Prostate gland (tissue), 2 donors: ENCODE measurements at regions of chr16 and their contacts with region 1.

Region 1: GRCh38 chr16:69243479-69243878 is 56.5 kb downstream of the SNTB2 start:
- DNase-seq: no peak
- H3K4me3 ChIP-seq: no peak overlapping the region
- H3K27ac ChIP-seq: peak overlapping the region in 1 of 2 donors; percentile 2
- H3K4me1 ChIP-seq: no peaks in the 10 kb centered on the region
- H3K27me3 ChIP-seq: no peaks in the 10 kb centered on the region
- CTCF ChIP-seq: no peak
- POLR2A ChIP-seq: no peak

Region 2: GRCh38 chr16:69186642-69187445 is 56.6 kb before region 1 on chr16 and contains the start of gene SNTB2:
- intact Hi-C with region 1: loop called (anchors 10 kb)
- DNase-seq: peak; percentile 94
- H3K4me3 ChIP-seq: peak within 1 kb of the TSS; percentile 80 to 87
- H3K27ac ChIP-seq: peak within 1 kb of the TSS; percentile 86
- H3K4me1 ChIP-seq: peaks cover 4% of the 10 kb centered on the region
- H3K27me3 ChIP-seq: no peaks in the 10 kb centered on the region
- CTCF ChIP-seq: peak in 1 of 4 experiments; percentile 15
- POLR2A ChIP-seq: peak; percentile 98
- total RNA-seq, gene SNTB2: 33.7 to 53.0 TPM

Region 3: GRCh38 chr16:69465083-69465721 is 221.7 kb after region 1 on chr16:
- intact Hi-C with region 1: no loop called
- DNase-seq: no peak
- H3K4me3 ChIP-seq: no peak overlapping the region
- H3K27ac ChIP-seq: peak overlapping the region in 1 of 2 donors; percentile 1
- H3K4me1 ChIP-seq: no peaks in the 10 kb centered on the region
- H3K27me3 ChIP-seq: no peaks in the 10 kb centered on the region
- CTCF ChIP-seq: peak in 2 of 4 experiments; percentile 13 to 16
- POLR2A ChIP-seq: no peak